Esophagus muscularis mucosa (tissue), 4 donors: ENCODE measurements at regions of chr12 and their contacts with region 1.

Region 1: GRCh38 chr12:108234158-108234557 is 105.0 kb downstream of the CMKLR1 start:
- DNase-seq: no peak
- H3K4me3 ChIP-seq: no peak overlapping the region
- H3K27ac ChIP-seq: no peak overlapping the region
- H3K4me1 ChIP-seq: no peaks in the 10 kb centered on the region
- H3K27me3 ChIP-seq: no peaks in the 10 kb centered on the region
- CTCF ChIP-seq: peak in 1 of 3 experiments; percentile 32
- EP300 ChIP-seq: no peak
- POLR2A ChIP-seq: no peak

Region 2: DNA sequence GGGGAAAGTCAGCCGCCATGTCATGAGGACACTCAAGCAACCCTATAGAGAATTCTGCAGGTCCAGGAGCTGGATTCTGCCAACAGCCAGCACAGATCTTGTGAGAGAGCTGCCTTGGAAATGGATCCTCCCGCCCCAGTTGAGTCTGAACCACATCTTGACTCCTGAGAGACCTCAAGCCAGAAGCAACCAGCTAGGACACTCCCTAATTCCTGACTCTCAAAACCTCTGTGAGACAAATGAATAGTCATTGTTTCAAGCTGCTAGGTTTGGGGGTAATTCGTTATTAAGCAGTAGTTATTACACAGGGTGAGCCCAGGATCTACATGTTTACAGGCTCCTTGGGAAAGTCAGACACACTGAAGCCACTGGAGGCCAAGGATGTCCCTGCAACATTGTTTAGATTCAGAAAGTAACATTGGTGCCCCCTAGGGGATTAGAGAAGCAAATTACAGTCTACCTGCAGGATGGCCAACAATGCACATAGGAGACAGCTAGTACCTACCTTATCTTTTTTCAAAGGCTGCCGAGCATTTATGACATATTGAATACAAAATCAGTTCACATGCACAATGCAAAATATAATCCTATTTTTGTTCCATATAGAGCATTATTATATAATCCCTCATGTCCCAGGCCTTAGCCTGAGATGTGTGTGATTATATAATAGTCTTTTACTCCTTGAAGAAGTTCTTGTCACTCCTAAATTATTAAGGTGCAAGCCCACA is 223.0 kb after region 1 on chr12:
- intact Hi-C with region 1: loop called (anchors 10 kb)
- DNase-seq: no peak
- H3K4me3 ChIP-seq: no peak overlapping the region
- H3K27ac ChIP-seq: no peak overlapping the region
- H3K4me1 ChIP-seq: no peaks in the 10 kb centered on the region
- H3K27me3 ChIP-seq: peaks cover 0 to 17% (median 2%) of the 10 kb centered on the region in 4 donors
- CTCF ChIP-seq: peak; percentile 58 to 65 (median 61)
- EP300 ChIP-seq: no peak
- POLR2A ChIP-seq: no peak

Region 3: DNA sequence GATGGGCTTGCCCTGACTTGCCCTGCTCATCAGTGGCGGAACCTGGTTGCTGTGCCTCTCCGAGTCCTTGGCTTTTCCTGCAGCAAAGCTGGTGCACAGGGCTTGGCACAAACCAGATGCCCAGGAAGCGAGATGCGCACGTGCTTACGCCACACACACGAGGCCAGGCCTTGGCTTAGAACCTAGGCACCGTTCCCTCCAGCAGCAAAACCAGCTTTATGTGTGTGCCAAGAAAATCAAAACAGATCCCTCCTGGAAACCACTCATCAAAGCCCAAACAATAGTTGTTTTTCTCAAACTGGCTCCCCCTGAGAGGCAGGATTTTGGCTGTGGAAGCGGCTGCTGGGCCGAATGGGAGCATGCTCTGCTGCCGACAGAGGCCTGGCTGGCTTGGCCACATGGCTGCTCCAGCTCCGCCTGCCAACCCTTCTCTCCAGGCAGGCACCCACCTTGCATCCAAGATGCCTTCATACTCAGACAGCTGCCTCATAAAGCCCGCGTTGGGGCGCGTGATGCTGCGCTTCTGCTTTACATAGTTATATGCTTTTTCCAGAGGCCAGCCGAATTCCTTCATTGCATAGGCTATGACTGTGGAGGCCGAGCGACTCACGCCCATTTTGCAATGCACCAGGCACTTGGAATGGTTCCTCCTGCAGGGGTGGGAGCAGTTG is 564.5 kb after region 1 on chr12:
- intact Hi-C with region 1: no loop called
- DNase-seq: no peak
- H3K4me3 ChIP-seq: no peak overlapping the region
- H3K27ac ChIP-seq: peak overlapping the region; percentile 90 to 95 (median 94)
- H3K4me1 ChIP-seq: peaks cover 53 to 72% (median 71%) of the 10 kb centered on the region in 4 donors
- H3K27me3 ChIP-seq: no peaks in the 10 kb centered on the region
- CTCF ChIP-seq: no peak
- EP300 ChIP-seq: no peak
- POLR2A ChIP-seq: no peak